MCF 10A (cell line): ENCODE measurements at regions of chr10 and their contacts with region 1.

Region 1: DNA sequence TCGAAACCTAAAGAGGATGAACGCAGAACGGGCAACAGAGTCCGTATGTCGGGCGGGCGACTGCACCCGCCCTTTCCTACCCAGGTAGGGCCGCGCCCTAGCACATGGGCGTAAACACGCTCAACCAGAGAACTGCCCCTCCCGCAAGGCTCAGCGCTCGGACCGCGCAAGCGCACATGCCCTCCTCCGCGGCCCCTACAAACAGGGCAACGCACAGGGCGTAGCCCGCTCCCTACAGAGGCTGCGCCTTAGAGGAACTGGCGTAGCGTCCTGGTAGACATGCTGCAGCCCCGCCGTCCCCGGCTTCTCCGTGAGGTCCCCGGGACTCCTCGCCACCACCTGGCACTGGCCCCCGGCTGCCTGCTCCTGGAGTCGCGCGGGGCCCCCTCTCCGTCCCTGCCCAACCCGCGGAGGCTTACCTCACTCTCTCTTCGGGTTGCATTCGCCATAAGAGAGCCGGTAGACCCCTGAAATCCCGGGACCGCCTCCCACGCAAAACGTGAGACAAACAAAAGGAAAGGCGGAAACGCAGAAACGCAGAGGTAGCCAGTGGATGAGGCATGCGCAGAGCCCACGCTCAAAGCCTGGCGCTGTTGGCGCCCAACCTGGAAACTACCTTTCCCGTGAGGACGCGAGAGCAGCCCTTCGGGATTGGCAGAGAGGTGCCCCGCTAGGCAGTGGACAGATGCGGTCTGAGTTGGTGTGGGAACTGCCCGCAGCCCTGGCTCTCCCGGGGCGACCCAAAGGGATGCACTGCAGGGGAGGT is at the start of gene ZNF33B:
- DNase-seq: peak; percentile 96
- H3K4me3 Mint-ChIP-seq: peak within 1 kb of the TSS; percentile 87
- H3K27ac Mint-ChIP-seq: peak within 1 kb of the TSS; percentile 97
- H3K4me1 Mint-ChIP-seq: peaks cover 23% of the 10 kb centered on the region
- H3K27me3 Mint-ChIP-seq: no peaks in the 10 kb centered on the region
- CTCF ChIP-seq: no peak
- total RNA-seq, gene ZNF33B: 14.6 and 18.7 TPM in 2 replicates

Region 2: GRCh38 chr10:42552493-42553407 is 85.5 kb before region 1 on chr10:
- CTCF ChIA-PET with region 1: interaction called, 4 read pairs
- POLR2A ChIA-PET with region 1: interaction called, 12 read pairs
- intact Hi-C with region 1: loop called (anchors 1 kb)
- DNase-seq: peak; percentile 98
- H3K4me3 Mint-ChIP-seq: peak overlapping the region; percentile 96
- H3K27ac Mint-ChIP-seq: peak overlapping the region; percentile 93
- H3K4me1 Mint-ChIP-seq: peaks cover 18% of the 10 kb centered on the region
- H3K27me3 Mint-ChIP-seq: no peaks in the 10 kb centered on the region
- CTCF ChIP-seq: no peak

Region 3: DNA sequence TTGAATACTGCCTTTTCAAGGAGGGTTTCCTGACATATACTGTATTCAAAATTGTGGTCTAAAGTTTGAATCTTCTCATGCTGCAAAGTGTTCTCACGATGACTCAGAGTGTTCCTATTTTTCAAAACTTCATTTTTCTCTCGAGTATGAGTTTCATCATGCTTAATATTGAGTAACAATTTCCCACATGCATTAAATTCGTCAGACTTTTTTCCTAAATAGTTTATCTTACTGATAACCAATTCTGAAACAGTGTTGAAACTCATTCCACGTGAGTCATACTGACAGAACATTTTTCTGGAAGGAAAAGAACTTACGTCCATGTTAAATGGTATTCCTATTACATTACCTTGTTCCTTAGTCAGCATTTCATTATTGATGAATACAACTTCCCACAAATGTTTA is 44.0 kb before region 1 on chr10:
- CTCF ChIA-PET with region 1: no interaction called
- POLR2A ChIA-PET with region 1: interaction called, 6 read pairs
- intact Hi-C with region 1: loop called (anchors 5 kb)
- DNase-seq: peak; percentile 65
- H3K4me3 Mint-ChIP-seq: peak overlapping the region; percentile 22
- H3K27ac Mint-ChIP-seq: peak overlapping the region; percentile 75
- H3K4me1 Mint-ChIP-seq: peaks cover 18% of the 10 kb centered on the region
- H3K27me3 Mint-ChIP-seq: no peaks in the 10 kb centered on the region
- CTCF ChIP-seq: no peak

Region 4: GRCh38 chr10:42623929-42624328 is 14.3 kb before region 1 on chr10:
- CTCF ChIA-PET with region 1: no interaction called
- POLR2A ChIA-PET with region 1: interaction called, 12 read pairs
- intact Hi-C with region 1: no loop called
- DNase-seq: no peak
- H3K4me3 Mint-ChIP-seq: no peak overlapping the region
- H3K27ac Mint-ChIP-seq: no peak overlapping the region
- H3K4me1 Mint-ChIP-seq: no peaks in the 10 kb centered on the region
- H3K27me3 Mint-ChIP-seq: no peaks in the 10 kb centered on the region
- CTCF ChIP-seq: no peak

Region 5: GRCh38 chr10:42952349-42952748 is 314.1 kb after region 1 on chr10:
- CTCF ChIA-PET with region 1: no interaction called
- POLR2A ChIA-PET with region 1: no interaction called
- intact Hi-C with region 1: no loop called
- DNase-seq: no peak
- H3K4me3 Mint-ChIP-seq: no peak overlapping the region
- H3K27ac Mint-ChIP-seq: no peak overlapping the region
- H3K4me1 Mint-ChIP-seq: no peaks in the 10 kb centered on the region
- H3K27me3 Mint-ChIP-seq: no peaks in the 10 kb centered on the region
- CTCF ChIP-seq: no peak